Common myeloid progenitor, CD34-positive (primary cell): ENCODE measurements at regions of chr20 and their contacts with region 1.

Region 1: DNA sequence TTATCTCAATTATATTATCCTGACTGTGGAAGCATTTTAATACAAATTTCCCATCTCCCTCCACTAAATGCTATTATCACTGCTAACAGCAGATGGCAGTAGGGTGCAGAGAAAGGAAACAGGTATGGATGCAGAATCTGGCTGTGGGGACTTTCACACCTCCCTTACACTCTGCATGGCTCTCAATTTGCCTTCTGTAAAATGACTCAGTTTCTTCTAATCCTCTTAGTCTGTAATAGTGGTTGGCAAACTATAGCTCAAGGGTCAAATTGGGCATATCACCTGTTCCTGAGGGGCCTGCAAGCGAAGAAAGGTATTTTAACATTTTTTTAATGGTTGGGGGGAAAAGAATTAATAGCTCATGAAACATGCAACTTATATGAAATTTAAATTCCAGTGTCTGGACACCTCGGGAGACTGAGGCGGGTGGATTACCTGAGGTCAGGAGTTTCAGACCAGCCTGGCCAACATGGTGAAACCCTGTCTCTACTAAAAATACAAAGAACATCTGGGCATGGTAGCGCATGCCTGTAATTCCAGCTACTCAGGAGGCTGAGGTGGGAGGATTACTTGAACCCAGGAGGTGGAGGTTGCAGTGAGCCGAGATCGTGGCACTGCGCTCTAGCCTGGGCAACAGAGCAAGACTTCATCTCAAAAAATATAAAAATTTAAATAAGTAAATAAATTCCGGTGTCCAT is 83.5 kb downstream of the ZMYND8 start:
- DNase-seq: peak; percentile 64 to 77 (median 65)
- H3K4me3 ChIP-seq: no peak overlapping the region
- H3K27ac ChIP-seq: no peak overlapping the region
- H3K4me1 ChIP-seq: peaks cover 0 to 19% (median 4%) of the 10 kb centered on the region in 4 experiments
- H3K27me3 ChIP-seq: no peaks in the 10 kb centered on the region

Region 2: DNA sequence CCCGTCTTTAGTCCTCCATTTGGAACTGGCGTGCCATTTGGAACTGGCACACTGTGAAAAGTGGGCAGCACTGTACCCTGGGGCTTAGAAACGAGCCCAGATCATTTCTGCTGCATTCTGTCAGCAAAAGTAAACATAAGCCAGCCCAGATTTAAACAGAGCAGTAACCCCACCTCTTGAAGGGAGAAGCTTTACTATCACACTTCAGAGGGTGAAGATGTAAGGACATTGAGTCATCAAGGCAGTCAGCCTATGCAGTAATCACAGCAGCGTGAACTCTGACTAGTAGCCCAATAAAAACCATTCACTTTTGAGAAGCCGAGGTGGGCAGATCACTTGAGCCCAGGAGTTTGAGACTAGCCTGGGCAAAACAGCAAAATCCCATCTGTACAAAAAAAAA is 161.5 kb before region 1 on chr20:
- CTCF ChIA-PET with region 1: no interaction called
- POLR2A ChIA-PET with region 1: no interaction called
- DNase-seq: no peak
- H3K4me3 ChIP-seq: no peak overlapping the region
- H3K27ac ChIP-seq: no peak overlapping the region
- H3K4me1 ChIP-seq: no peaks in the 10 kb centered on the region
- H3K27me3 ChIP-seq: peaks cover 0 to 7% (median 0%) of the 10 kb centered on the region in 5 experiments

Region 3: GRCh38 chr20:47258745-47259695 is 14.0 kb before region 1 on chr20:
- CTCF ChIA-PET with region 1: interaction called, 17 read pairs
- POLR2A ChIA-PET with region 1: no interaction called
- DNase-seq: peak in 2 of 3 donors; percentile 58 to 69
- H3K4me3 ChIP-seq: no peak overlapping the region
- H3K27ac ChIP-seq: peak overlapping the region; percentile 27 to 69
- H3K4me1 ChIP-seq: peaks cover 0 to 20% (median 12%) of the 10 kb centered on the region in 4 experiments
- H3K27me3 ChIP-seq: no peaks in the 10 kb centered on the region

Region 4: GRCh38 chr20:47290008-47290407 is 17.0 kb after region 1 on chr20:
- CTCF ChIA-PET with region 1: interaction called, 33 read pairs
- POLR2A ChIA-PET with region 1: interaction called, 3 read pairs
- DNase-seq: no peak
- H3K4me3 ChIP-seq: no peak overlapping the region
- H3K27ac ChIP-seq: no peak overlapping the region
- H3K4me1 ChIP-seq: no peaks in the 10 kb centered on the region
- H3K27me3 ChIP-seq: no peaks in the 10 kb centered on the region

Region 5: DNA sequence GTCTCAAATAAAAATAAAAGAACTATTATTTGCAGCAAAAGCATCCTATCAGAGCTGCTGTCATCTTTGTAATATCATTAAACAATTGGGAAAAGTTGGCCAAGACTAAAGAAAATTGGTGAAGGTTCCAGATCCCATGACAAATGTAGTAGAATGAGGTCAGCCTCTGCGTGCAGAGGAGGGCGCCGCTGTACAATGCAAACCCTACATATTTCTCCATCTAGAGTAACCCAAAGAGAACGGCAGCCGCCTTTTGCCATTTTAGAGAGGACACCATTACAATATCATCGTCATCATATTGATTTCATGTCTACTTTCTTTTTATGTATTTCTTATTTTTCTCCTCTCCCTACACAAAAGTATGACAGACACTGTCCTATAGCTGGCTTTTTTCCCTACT is 23.9 kb after region 1 on chr20:
- CTCF ChIA-PET with region 1: interaction called, 33 read pairs
- POLR2A ChIA-PET with region 1: interaction called, 3 read pairs
- DNase-seq: peak in 2 of 3 donors; percentile 39 to 44
- H3K4me3 ChIP-seq: no peak overlapping the region
- H3K27ac ChIP-seq: no peak overlapping the region
- H3K4me1 ChIP-seq: no peaks in the 10 kb centered on the region
- H3K27me3 ChIP-seq: no peaks in the 10 kb centered on the region

Region 6: GRCh38 chr20:47356526-47357295 is 83.7 kb after region 1 on chr20 and contains the start of gene ZMYND8:
- CTCF ChIA-PET with region 1: interaction called, 14 read pairs
- POLR2A ChIA-PET with region 1: no interaction called
- DNase-seq: peak; percentile 89 to 94 (median 94)
- H3K4me3 ChIP-seq: peak within 1 kb of the TSS in 6 of 7 experiments; percentile 48 to 77 (median 66)
- H3K27ac ChIP-seq: peak within 1 kb of the TSS; percentile 92 to 97
- H3K4me1 ChIP-seq: peaks cover 59 to 100% (median 97%) of the 10 kb centered on the region in 4 experiments
- H3K27me3 ChIP-seq: no peaks in the 10 kb centered on the region

Region 7: GRCh38 chr20:47392015-47392720 is 119.1 kb after region 1 on chr20:
- CTCF ChIA-PET with region 1: interaction called, 312 read pairs
- POLR2A ChIA-PET with region 1: interaction called, 5 read pairs
- DNase-seq: peak; percentile 50 to 85 (median 77)
- H3K4me3 ChIP-seq: no peak overlapping the region
- H3K27ac ChIP-seq: peak overlapping the region in 1 of 2 experiments; percentile 70
- H3K4me1 ChIP-seq: peaks cover 0 to 8% (median 0%) of the 10 kb centered on the region in 4 experiments
- H3K27me3 ChIP-seq: no peaks in the 10 kb centered on the region

Region 8: DNA sequence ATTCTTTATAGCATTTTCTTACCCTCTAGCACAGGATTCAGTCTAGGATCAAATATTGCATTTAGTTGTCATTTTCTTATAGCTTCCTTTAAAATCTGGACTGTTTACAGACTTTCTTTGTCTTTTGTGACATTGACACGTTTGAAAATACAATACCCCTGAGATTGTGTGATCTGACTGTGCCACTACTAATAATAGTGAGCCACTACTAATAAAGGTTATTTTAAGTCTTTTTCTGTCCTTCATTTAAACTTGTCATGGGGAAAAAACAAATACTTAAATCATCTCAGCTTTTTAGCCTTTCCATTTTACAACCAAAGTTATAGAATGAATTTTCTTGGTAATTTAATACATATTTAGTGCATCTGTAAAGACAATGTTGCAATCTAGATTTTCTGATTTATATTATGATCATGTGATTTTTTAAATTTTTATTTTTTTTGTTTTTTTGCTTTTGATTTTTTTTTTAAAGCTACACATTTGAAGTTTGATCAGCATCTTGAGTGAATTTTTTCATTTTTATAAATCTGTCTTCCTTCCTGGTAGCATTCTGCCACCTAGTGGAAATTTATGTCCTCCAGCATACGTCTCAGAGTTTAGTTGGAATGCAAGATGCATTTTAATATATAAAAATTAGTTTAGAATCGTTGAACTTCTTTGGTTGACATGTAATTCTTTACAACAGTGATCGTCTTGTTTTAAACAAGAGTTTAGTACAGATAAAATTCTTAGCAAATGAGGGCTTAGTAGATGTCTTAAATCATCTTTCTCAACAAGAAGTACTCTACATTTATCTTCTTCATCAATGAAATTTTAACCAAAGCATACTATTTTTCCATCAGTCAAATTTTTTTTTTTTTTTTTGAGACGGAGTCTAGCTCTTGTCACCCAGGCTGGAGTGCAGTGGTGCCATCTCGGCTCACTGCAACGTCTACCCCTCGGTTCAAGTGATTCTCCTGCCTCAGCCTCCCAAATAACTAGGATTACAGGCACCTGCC is 348.1 kb after region 1 on chr20:
- CTCF ChIA-PET with region 1: interaction called, 14 read pairs
- POLR2A ChIA-PET with region 1: no interaction called
- DNase-seq: peak; percentile 72 to 86 (median 85)
- H3K4me3 ChIP-seq: no peak overlapping the region
- H3K27ac ChIP-seq: no peak overlapping the region
- H3K4me1 ChIP-seq: no peaks in the 10 kb centered on the region
- H3K27me3 ChIP-seq: no peaks in the 10 kb centered on the region